SK-N-SH (cell line): ENCODE measurements at regions of chr22 and their contacts with region 1.

Region 1: GRCh38 chr22:24423519-24424000 is 3.8 kb upstream of the ADORA2A start:
- DNase-seq: peak; percentile 96
- H3K4me3 ChIP-seq: peak overlapping the region; percentile 58 to 72
- H3K27ac ChIP-seq: peak overlapping the region in 1 of 2 experiments; percentile 89; a peak in 1 of 4 replicates
- H3K4me1 ChIP-seq: peaks cover 0 to 76% of the 10 kb centered on the region in 2 experiments; a peak in 1 of 4 replicates
- H3K27me3 ChIP-seq: no peaks in the 10 kb centered on the region
- CTCF ChIP-seq: peak; percentile 70
- EP300 ChIP-seq: no peak
- RAD21 ChIP-seq: peak; percentile 67

Region 2: GRCh38 chr22:24325105-24325757 is 98.3 kb before region 1 on chr22:
- CTCF ChIA-PET with region 1: interaction called, 40 read pairs
- POLR2A ChIA-PET with region 1: interaction called, 3 read pairs
- DNase-seq: peak; percentile 42
- H3K4me3 ChIP-seq: no peak overlapping the region
- H3K27ac ChIP-seq: peak overlapping the region; percentile 80 to 97
- H3K4me1 ChIP-seq: peaks cover 19 to 45% of the 10 kb centered on the region in 2 experiments; a peak in 3 of 4 replicates
- H3K27me3 ChIP-seq: no peaks in the 10 kb centered on the region
- CTCF ChIP-seq: peak; percentile 80
- EP300 ChIP-seq: peak in 1 of 2 experiments; percentile 27; a peak in 1 of 4 replicates
- RAD21 ChIP-seq: peak; percentile 95

Region 3: GRCh38 chr22:24410110-24410856 is 13.3 kb before region 1 on chr22:
- CTCF ChIA-PET with region 1: interaction called, 42 read pairs
- POLR2A ChIA-PET with region 1: interaction called, 12 read pairs
- DNase-seq: peak; percentile 6
- H3K4me3 ChIP-seq: no peak overlapping the region
- H3K27ac ChIP-seq: peak overlapping the region in 1 of 2 experiments; percentile 18; a peak in 1 of 4 replicates
- H3K4me1 ChIP-seq: peaks cover 6 to 50% of the 10 kb centered on the region in 2 experiments; a peak in 2 of 4 replicates
- H3K27me3 ChIP-seq: no peaks in the 10 kb centered on the region
- CTCF ChIP-seq: no peak
- EP300 ChIP-seq: no peak
- RAD21 ChIP-seq: no peak

Region 4: GRCh38 chr22:24450610-24451009 is 27.1 kb after region 1 on chr22:
- CTCF ChIA-PET with region 1: interaction called, 11 read pairs
- POLR2A ChIA-PET with region 1: interaction called, 4 read pairs
- DNase-seq: peak; percentile 82
- H3K4me3 ChIP-seq: no peak overlapping the region
- H3K27ac ChIP-seq: peak overlapping the region in 1 of 2 experiments; percentile 99; a peak in 3 of 4 replicates
- H3K4me1 ChIP-seq: peaks cover 21 to 49% of the 10 kb centered on the region in 2 experiments
- H3K27me3 ChIP-seq: no peaks in the 10 kb centered on the region
- CTCF ChIP-seq: no peak
- EP300 ChIP-seq: peak in 1 of 2 experiments; percentile 94; a peak in 2 of 4 replicates
- RAD21 ChIP-seq: peak; percentile 29; the same call in 1 of the 2 replicates

Region 5: GRCh38 chr22:24525416-24526037 is 102.0 kb after region 1 on chr22:
- CTCF ChIA-PET with region 1: interaction called, 46 read pairs
- POLR2A ChIA-PET with region 1: interaction called, 4 read pairs
- DNase-seq: peak; percentile 77
- H3K4me3 ChIP-seq: no peak overlapping the region; a peak in 1 of 4 replicates
- H3K27ac ChIP-seq: no peak overlapping the region; a peak in 1 of 4 replicates
- H3K4me1 ChIP-seq: peaks cover 10 to 47% of the 10 kb centered on the region in 2 experiments; a peak in 2 of 4 replicates
- H3K27me3 ChIP-seq: no peaks in the 10 kb centered on the region
- CTCF ChIP-seq: peak; percentile 93
- EP300 ChIP-seq: no peak
- RAD21 ChIP-seq: peak; percentile 88